ENCODE measurements at regions of chr2 and their contacts with region 1.

Region 1: DNA sequence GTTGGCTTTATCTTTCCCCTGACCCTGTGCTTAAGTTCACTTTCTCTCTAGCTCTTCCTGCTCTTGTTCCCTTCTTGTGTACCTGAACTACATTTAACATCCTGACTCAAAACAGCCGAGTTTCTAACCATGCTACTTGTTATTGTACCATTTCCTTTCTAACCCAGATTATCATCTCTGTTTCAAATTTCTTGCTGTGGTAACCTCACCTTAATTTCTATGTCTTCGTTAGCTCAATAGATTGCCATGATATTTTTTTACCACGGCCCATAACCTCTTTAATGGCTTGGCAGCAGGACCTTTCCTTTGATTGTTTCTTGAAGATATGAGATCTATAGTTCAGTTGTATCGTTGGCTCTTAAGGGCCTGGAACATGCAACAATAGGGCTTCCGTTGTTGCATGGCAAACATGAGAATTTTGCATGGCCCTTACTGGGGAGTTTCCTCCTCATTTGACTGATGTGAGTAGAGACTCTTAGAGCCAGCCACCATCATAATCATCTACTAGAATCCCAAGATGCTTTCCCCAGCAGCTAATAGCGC is 11.1 kb downstream of the CFAP36 start:
- DNase-seq: peak; percentile 25
- H3K4me3 Mint-ChIP-seq: no peak overlapping the region
- H3K27ac Mint-ChIP-seq: peak overlapping the region; percentile 86
- H3K4me1 Mint-ChIP-seq: peaks cover 21% of the 10 kb centered on the region
- H3K27me3 Mint-ChIP-seq: no peaks in the 10 kb centered on the region

Region 2: DNA sequence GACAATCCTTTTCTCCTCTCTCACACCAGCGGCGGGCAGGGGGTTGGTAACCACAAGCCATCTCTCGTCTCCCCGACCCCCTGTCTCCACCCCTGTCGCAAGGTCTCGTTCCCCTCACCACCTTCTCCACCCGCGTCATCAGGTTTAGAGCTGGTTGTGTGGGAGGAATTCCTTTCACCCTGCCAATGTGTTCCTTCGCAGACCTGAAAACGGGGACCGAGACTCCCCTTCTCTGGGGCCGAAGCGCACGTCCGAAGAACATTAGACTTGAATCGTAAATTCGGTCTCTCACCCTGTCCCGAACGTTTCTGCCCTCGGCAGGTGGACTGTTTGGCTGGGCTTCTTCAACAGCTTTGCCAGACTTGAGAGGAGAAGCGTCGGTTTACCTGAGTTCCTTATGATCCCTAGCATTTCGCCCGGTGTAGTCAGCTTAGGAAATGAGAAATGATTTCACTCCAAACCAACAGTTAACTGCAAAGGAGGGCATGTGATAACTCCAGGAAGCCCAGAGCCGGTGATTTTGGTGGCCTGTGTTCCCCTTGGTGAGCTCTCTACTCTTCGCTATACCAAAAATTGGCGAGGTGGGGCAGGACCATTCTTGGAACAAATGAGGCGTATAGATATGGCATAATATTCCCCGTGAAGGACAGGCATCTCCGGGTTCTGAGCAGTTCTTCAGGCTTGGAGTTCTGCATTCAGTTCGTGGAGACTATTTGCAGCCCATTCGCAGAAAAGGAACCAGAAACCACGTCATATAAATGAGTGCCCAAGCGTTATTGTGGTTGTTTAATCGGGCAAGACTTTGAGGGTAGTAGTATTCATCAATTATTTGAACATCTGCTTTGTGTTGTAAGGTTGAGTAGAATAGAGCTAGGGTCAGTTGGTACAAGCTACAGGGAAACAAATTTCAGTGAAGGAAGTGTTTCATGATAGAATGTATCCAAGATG is 10.4 kb before region 1 on chr2:
- CTCF ChIA-PET with region 1: interaction called, 10 read pairs
- DNase-seq: peak; percentile 43
- H3K4me3 Mint-ChIP-seq: peak overlapping the region; percentile 99
- H3K27ac Mint-ChIP-seq: peak overlapping the region; percentile 98
- H3K4me1 Mint-ChIP-seq: peaks cover 18% of the 10 kb centered on the region
- H3K27me3 Mint-ChIP-seq: no peaks in the 10 kb centered on the region